Sciatic nerve (tissue), 2 donors: ENCODE measurements at regions of chrX and their contacts with region 1.

Region 1: GRCh38 chrX:15694941-15695451 is 30.4 kb upstream of the CLTRN start:
- DNase-seq: no peak
- ATAC-seq: no peak

Region 2: GRCh38 chrX:14916017-14916674 is 778.9 kb before region 1 on chrX:
- intact Hi-C with region 1: loop called (anchors 10 kb)
- DNase-seq: no peak
- ATAC-seq: no peak